Mucosa of descending colon (tissue), 3 donors: ENCODE measurements at regions of chr20 and their contacts with region 1.

Region 1: DNA sequence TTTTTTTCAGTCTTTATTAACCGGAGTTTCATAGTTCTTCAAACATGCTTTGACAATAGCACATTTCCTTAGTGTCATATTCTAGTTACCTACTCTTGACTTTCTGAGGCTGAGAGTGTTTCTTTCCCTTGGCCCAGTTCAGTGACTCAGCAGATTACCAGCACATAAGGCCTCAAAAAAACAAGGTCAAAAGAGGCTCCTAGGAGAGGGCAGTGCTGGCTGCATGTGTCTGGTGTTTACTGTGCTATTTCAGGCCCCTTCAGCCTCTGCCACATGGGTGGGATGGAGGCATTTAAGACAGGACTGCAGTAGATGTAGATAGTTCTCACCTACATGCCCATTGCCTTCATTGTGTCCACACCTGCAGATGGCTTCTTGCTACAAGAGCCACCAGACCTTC is 198.2 kb upstream of the SSTR4 start:
- DNase-seq: no peak
- ATAC-seq: no peak
- H3K4me3 ChIP-seq: no peak overlapping the region
- H3K4me1 ChIP-seq: no peaks in the 10 kb centered on the region
- CTCF ChIP-seq: no peak

Region 2: DNA sequence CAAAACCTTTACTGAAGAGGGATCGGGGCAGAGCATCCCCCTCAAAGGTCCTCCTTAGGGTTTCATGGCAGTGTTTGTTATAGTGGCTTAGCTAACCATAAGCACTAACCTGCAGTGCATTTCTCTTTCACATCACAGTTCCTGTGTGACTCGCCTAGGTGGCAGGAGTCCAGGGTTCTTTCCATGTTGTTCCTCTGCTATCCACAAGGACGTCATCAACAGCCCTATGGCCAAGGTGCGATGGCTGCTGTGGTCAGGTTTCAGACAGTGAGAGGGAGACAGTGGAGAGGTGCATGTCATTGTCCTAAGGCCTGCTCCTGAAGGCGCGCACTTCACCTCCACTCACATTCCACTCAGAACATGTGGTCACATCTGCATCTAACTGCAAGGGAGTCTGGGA is 213.7 kb before region 1 on chr20:
- intact Hi-C with region 1: loop called in 1 of 2 experiments (anchors 10 kb)
- DNase-seq: no peak
- ATAC-seq: peak; percentile 8
- H3K4me3 ChIP-seq: no peak overlapping the region
- H3K4me1 ChIP-seq: no peaks in the 10 kb centered on the region
- CTCF ChIP-seq: no peak